Uterus (tissue), 4 donors: ENCODE measurements at regions of chr2 and their contacts with region 1.

Region 1: DNA sequence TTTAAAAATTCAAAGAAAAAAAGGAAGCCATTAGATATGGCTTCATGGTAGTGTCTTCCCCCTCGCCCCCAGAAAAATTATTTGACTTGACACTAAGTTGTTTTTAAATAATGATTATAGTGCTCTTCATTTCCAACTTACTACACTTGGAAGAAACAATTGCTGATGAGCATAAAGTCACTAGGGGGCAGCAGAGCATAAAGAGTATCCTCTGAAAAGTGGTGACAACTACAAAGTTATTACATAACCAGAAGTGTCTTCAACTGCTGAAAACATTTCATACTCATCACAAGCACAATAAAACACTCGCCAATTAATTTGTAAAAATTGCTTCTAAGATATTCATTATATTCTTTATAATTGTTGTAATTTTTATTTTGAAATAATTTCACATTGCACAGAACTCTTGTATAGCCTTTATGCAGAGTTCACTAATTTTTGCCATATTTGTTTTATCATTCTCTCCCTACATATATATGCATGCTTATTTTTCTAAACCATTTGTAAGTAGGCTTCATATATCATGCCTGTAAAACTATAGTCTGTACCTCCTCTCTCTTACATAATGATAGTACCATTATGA is 54.9 kb downstream of the EXOC6B start:
- DNase-seq: peak; percentile 21 to 73
- H3K4me3 ChIP-seq: no peak overlapping the region
- H3K27ac ChIP-seq: no peak overlapping the region
- H3K4me1 ChIP-seq: no peaks in the 10 kb centered on the region
- H3K27me3 ChIP-seq: no peaks in the 10 kb centered on the region
- CTCF ChIP-seq: peak; percentile 77 to 90 (median 82)
- POLR2A ChIP-seq: no peak

Region 2: GRCh38 chr2:72361516-72361915 is 409.5 kb before region 1 on chr2:
- intact Hi-C with region 1: no loop called
- DNase-seq: no peak
- H3K4me3 ChIP-seq: no peak overlapping the region
- H3K27ac ChIP-seq: no peak overlapping the region
- H3K4me1 ChIP-seq: no peaks in the 10 kb centered on the region
- H3K27me3 ChIP-seq: no peaks in the 10 kb centered on the region
- CTCF ChIP-seq: no peak
- POLR2A ChIP-seq: no peak

Region 3: GRCh38 chr2:72862239-72862988 is 91.4 kb after region 1 on chr2:
- intact Hi-C with region 1: loop called (anchors 5 kb)
- DNase-seq: peak; percentile 82 to 89
- H3K4me3 ChIP-seq: no peak overlapping the region
- H3K27ac ChIP-seq: no peak overlapping the region
- H3K4me1 ChIP-seq: peaks cover 0 to 3% of the 10 kb centered on the region in 2 donors
- H3K27me3 ChIP-seq: peaks cover 0 to 19% of the 10 kb centered on the region in 2 donors
- CTCF ChIP-seq: peak; percentile 88 to 97 (median 92)
- POLR2A ChIP-seq: no peak